ENCODE measurements at regions of chr15 and their contacts with region 1.

Region 1: GRCh38 chr15:74545880-74546656 is 5.0 kb downstream of the ARID3B start:
- H3K4me3 Mint-ChIP-seq: peak overlapping the region; percentile 9
- H3K27ac Mint-ChIP-seq: peak overlapping the region; percentile 78
- H3K4me1 Mint-ChIP-seq: peaks cover 57% of the 10 kb centered on the region
- H3K27me3 Mint-ChIP-seq: peaks cover 45% of the 10 kb centered on the region

Region 2: DNA sequence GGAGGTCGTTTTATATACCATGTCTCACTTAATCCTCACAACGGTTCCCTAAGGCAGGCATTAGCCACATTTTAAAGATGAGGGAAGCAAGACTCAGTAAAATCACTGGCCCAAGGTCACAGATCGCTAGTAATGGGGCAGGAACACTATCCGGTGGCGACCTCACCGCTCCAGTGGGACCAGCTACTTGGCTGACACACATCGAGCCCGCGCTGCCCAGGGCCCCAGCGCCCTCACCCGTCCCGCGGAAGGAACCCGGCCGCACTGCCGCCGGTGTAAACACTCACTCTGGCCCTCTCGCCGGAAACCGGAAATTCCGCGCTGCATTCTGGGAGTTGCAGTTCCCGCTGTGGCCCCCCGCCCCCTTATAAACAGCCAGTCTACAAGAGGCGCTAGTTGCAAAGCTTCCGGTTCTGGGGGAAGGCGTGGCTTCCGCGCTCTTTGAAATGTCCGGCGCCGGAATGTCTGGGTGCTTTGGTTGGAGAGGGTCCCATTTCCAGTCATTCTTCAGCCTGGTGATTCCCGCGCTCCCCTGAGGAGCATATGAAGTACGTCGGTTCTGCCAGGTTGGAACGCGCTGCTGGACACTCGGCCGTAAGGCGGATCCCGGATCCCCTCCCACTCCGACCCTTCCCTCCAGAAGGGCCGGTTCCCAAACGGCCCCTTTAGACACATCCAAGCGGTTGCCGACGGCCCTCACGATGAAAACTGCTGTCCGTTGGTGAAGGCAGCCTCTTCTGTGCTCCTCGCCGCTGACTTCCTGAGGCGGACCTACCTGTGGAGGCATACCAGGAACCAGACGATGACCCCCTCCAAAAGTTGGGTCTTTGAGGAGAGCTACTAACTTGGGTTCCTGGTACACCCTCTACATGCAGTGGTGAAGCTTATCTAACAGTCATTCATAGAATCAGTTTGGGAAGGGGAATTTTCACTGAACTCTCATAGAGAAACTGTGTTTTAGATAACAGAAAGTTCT is 84.9 kb before region 1 on chr15 and contains the start of gene UBL7:
- intact Hi-C with region 1: loop called (anchors 2 kb)
- H3K4me3 Mint-ChIP-seq: peak within 1 kb of the TSS; percentile 90
- H3K27ac Mint-ChIP-seq: peak within 1 kb of the TSS; percentile 82
- H3K4me1 Mint-ChIP-seq: peaks cover 52% of the 10 kb centered on the region
- H3K27me3 Mint-ChIP-seq: no peaks in the 10 kb centered on the region

Region 3: GRCh38 chr15:74598126-74598842 is 52.2 kb after region 1 on chr15:
- intact Hi-C with region 1: loop called (anchors 2 kb)
- H3K4me3 Mint-ChIP-seq: peak overlapping the region; percentile 92
- H3K27ac Mint-ChIP-seq: peak overlapping the region; percentile 91
- H3K4me1 Mint-ChIP-seq: peaks cover 26% of the 10 kb centered on the region
- H3K27me3 Mint-ChIP-seq: peaks cover 2% of the 10 kb centered on the region

Region 4: DNA sequence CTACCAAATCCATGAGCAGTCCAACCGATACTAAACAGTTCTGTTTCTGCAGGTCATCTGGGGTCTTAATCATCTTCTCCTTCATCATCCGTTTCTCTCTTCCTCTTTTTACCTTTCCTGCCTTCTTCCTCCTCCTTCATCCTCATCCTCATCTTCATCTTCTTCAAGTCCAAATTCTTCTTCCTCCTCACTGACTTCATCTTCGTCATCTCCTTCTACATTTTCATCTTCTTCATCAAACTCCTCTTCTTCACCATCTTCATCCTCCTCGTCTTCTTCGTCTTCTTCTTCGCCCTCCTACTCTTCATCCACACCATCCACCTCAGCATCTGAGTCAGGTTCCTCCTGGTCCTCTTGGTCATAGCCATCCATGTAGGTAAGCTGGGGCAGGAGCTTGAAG is 775.6 kb after region 1 on chr15:
- intact Hi-C with region 1: no loop called
- H3K4me3 Mint-ChIP-seq: no peak overlapping the region
- H3K27ac Mint-ChIP-seq: no peak overlapping the region
- H3K4me1 Mint-ChIP-seq: no peaks in the 10 kb centered on the region
- H3K27me3 Mint-ChIP-seq: peaks cover 5% of the 10 kb centered on the region

Measured in dendritic cell treated with granulocyte-macrophage colony-stimulating factor and Interleukin-4, amounts not matched to agents 40 ng/mL and 50 ng/mL, for 4 days (primary cell).